Caco-2 (cell line): ENCODE measurements at regions of chr11 and their contacts with region 1.

Region 1: DNA sequence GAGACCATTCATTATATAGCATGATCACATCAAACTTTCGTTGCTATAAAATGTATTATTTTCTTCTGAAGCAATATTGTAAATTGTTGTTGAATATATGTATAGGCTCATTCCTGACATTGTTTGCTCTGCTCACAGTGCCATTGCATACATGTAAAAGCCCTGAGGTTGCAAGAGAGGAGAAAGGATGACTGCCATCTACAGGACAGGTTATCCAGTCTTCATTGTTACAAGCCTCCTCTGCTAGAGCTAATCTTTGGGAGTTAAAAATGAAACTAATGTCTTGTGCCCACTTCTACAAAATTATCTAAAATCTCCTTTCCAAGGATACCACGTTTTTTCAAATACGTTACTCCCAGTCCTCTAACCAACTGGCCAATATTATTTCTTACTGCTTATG is 16.4 kb upstream of the OR5AL1 start:
- DNase-seq: no peak
- H3K4me3 ChIP-seq: no peak overlapping the region
- H3K4me3 Mint-ChIP-seq: no peak overlapping the region
- H3K27ac Mint-ChIP-seq: no peak overlapping the region
- H3K4me1 ChIP-seq: no peaks in the 10 kb centered on the region
- H3K4me1 Mint-ChIP-seq: no peaks in the 10 kb centered on the region
- H3K27me3 ChIP-seq: no peaks in the 10 kb centered on the region
- H3K27me3 Mint-ChIP-seq: no peaks in the 10 kb centered on the region
- CTCF ChIP-seq: peak in 1 of 2 experiments; percentile 15

Region 2: GRCh38 chr11:55942785-55943392 is 453.2 kb before region 1 on chr11:
- CTCF ChIA-PET with region 1: no interaction called
- POLR2A ChIA-PET with region 1: no interaction called
- intact Hi-C with region 1: loop called (anchors 10 kb)
- DNase-seq: peak in 1 of 2 experiments; percentile 57
- H3K4me3 ChIP-seq: no peak overlapping the region
- H3K4me3 Mint-ChIP-seq: no peak overlapping the region
- H3K27ac Mint-ChIP-seq: no peak overlapping the region
- H3K4me1 ChIP-seq: peaks cover 5% of the 10 kb centered on the region; the same call in 1 of the 2 replicates
- H3K4me1 Mint-ChIP-seq: no peaks in the 10 kb centered on the region
- H3K27me3 ChIP-seq: no peaks in the 10 kb centered on the region
- H3K27me3 Mint-ChIP-seq: peaks cover 2% of the 10 kb centered on the region
- CTCF ChIP-seq: peak; percentile 55 to 65